MCF 10A (cell line): ENCODE measurements at regions of chr5 and their contacts with region 1.

Region 1: GRCh38 chr5:151051066-151051930 is 29.5 kb downstream of the TNIP1 start:
- DNase-seq: peak; percentile 83
- H3K4me3 Mint-ChIP-seq: no peak overlapping the region
- H3K27ac Mint-ChIP-seq: peak overlapping the region; percentile 62
- H3K4me1 Mint-ChIP-seq: no peaks in the 10 kb centered on the region
- H3K27me3 Mint-ChIP-seq: no peaks in the 10 kb centered on the region
- CTCF ChIP-seq: peak; percentile 89

Region 2: GRCh38 chr5:150801117-150801927 is 250.0 kb before region 1 on chr5:
- CTCF ChIA-PET with region 1: interaction called, 3 read pairs
- POLR2A ChIA-PET with region 1: no interaction called
- intact Hi-C with region 1: loop called (anchors 5 kb)
- DNase-seq: peak; percentile 87
- H3K4me3 Mint-ChIP-seq: peak overlapping the region; percentile 64
- H3K27ac Mint-ChIP-seq: peak overlapping the region; percentile 36
- H3K4me1 Mint-ChIP-seq: peaks cover 14% of the 10 kb centered on the region
- H3K27me3 Mint-ChIP-seq: no peaks in the 10 kb centered on the region
- CTCF ChIP-seq: peak; percentile 68

Region 3: DNA sequence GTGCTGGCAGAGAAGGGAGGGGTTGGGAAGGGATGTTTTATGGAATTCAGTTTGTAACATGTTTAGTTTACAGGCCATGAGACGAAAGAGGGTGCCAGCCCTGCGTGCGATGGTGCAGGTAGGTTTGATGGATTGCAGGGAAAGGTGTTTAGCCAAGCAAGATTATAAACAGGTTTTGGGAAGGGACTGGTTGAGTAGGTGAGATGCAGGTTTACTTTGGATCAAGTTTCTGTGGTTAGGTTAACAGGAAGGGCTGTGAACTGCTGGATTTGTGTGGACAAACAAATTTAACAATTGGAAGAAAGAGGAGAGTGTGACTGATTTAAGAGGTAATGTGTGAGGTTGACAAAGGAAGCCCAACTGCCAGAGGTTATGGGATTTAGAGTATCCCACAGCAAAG is 63.6 kb before region 1 on chr5:
- CTCF ChIA-PET with region 1: no interaction called
- POLR2A ChIA-PET with region 1: no interaction called
- intact Hi-C with region 1: no loop called
- DNase-seq: no peak
- H3K4me3 Mint-ChIP-seq: no peak overlapping the region
- H3K27ac Mint-ChIP-seq: no peak overlapping the region
- H3K4me1 Mint-ChIP-seq: no peaks in the 10 kb centered on the region
- H3K27me3 Mint-ChIP-seq: no peaks in the 10 kb centered on the region
- CTCF ChIP-seq: no peak

Region 4: GRCh38 chr5:151002250-151002649 is 49.0 kb before region 1 on chr5:
- CTCF ChIA-PET with region 1: interaction called, 160 read pairs
- POLR2A ChIA-PET with region 1: no interaction called
- intact Hi-C with region 1: loop called (anchors 1 kb)
- DNase-seq: peak; percentile 77
- H3K4me3 Mint-ChIP-seq: no peak overlapping the region
- H3K27ac Mint-ChIP-seq: no peak overlapping the region
- H3K4me1 Mint-ChIP-seq: no peaks in the 10 kb centered on the region
- H3K27me3 Mint-ChIP-seq: no peaks in the 10 kb centered on the region
- CTCF ChIP-seq: peak; percentile 79

Region 5: DNA sequence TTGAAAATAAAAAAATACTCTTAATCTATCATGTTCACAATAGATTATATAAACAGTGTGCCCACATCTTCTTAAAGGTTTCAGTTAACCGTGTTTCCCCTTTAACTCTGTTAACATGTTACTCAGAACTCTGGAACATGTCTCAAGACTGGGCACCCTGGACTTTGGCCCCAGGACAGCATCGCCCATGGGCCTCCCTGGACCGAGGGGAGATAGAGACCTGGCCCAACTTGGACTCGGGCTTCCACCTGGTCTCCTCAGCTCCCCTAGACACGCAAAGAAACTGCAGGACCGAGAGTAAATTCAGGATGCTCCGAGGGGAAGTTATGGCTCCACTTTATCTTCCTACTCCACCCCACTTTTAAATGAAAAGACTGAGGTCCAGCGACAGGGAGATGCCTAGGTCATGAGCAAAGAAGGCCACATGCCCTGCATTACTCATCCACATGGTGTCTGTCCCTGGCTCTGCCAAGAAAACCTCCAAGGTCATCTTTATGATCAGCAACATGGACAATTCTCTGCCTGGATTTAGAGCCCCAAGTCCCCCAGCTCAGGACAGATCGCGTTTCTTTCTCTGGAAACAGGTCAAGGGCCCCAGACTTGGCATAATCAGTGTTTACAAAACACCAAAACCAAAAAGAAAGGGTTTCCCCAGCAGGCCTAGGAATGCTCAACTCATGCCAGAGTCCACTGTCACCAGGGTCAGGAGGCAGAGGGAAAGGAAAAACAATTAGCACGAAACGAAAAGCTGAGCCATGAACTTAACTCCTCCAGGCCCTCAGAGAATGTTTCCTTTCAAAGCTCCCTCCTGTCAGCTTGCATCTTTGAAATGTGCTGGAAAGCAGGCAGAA is 13.5 kb before region 1 on chr5:
- CTCF ChIA-PET with region 1: interaction called, 230 read pairs
- POLR2A ChIA-PET with region 1: interaction called, 6 read pairs
- intact Hi-C with region 1: no loop called
- DNase-seq: no peak
- H3K4me3 Mint-ChIP-seq: no peak overlapping the region
- H3K27ac Mint-ChIP-seq: peak overlapping the region; percentile 75
- H3K4me1 Mint-ChIP-seq: peaks cover 7% of the 10 kb centered on the region
- H3K27me3 Mint-ChIP-seq: no peaks in the 10 kb centered on the region
- CTCF ChIP-seq: no peak

Region 6: DNA sequence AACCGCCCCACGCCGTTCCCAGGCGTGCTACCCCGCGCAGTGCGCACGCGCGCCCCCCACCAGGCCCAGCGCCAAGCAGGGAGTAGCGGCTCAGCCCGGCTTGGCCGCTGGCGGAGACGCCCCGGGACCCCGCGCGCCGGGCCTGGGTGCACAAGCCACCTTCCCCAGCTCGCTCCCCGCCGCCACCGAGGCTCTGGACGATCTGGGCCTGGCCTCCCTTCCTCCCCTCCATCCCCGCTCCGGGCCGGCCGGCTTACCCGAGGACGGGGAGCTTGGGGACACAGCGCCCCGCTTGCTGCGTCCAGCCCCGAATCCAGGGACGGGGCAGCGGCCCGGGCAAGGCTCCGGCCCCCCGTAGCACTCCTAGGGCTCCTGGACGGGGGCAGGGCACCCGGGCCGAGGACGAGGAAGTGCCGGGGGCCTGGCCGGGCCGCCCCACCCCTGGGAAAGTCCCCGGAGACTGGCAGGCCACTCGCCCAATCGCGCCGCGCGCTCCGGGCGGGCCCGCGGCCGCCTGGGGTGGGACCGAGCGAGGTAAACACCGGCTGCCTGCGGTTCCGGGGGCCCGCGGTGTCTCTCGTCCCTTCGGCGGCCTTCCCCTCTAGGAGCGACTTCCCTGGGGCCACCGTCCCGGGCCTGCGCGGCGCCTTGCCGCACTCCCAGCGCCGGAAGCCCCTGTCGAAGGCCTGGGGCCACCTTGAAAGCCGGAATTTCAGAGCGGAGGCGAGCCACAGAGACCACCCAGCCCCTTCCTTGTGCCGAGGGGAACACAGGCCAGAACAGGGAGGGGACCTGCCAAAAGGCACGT is 29.5 kb after region 1 on chr5 and contains the start of gene TNIP1:
- CTCF ChIA-PET with region 1: interaction called, 332 read pairs
- POLR2A ChIA-PET with region 1: interaction called, 21 read pairs
- intact Hi-C with region 1: loop called (anchors 2 kb)
- DNase-seq: peak; percentile 94
- H3K4me3 Mint-ChIP-seq: peak within 1 kb of the TSS; percentile 74
- H3K27ac Mint-ChIP-seq: peak within 1 kb of the TSS; percentile 59
- H3K4me1 Mint-ChIP-seq: peaks cover 78% of the 10 kb centered on the region
- H3K27me3 Mint-ChIP-seq: no peaks in the 10 kb centered on the region
- CTCF ChIP-seq: no peak
- total RNA-seq, gene TNIP1: 246 and 342 TPM in 2 replicates

Region 7: DNA sequence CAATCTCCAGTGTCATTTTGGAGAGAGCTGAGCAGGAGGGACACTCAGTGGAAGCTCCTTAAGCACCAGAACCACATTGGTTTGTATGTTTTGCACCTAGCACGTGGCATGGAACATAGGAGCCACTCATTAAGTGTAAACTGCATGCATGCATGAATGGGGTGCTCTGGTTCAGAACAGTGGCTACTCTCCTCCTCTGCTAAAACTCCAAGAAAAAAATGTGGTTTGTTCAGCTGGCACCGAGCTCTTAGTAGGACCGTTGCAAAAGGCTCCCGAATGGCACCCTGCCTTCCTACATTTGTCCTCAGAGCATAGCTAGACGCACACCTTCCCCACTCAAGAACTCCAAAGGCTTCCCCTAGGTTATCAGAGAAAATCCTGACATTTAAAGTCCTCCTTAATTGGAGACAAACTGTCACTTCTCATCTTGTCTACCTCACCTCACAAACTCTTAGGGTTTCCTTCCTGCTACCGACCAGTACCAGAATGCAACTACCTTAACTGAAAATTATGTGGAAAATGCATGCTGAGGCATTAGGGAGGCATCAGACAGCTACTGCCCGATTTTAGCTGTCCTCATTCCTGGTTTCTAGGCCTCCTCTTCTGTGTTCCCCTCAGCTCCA is 47.3 kb after region 1 on chr5:
- CTCF ChIA-PET with region 1: interaction called, 1,587 read pairs
- POLR2A ChIA-PET with region 1: interaction called, 3 read pairs
- intact Hi-C with region 1: no loop called
- DNase-seq: no peak
- H3K4me3 Mint-ChIP-seq: no peak overlapping the region
- H3K27ac Mint-ChIP-seq: no peak overlapping the region
- H3K4me1 Mint-ChIP-seq: peaks cover 23% of the 10 kb centered on the region
- H3K27me3 Mint-ChIP-seq: no peaks in the 10 kb centered on the region
- CTCF ChIP-seq: no peak

Region 8: DNA sequence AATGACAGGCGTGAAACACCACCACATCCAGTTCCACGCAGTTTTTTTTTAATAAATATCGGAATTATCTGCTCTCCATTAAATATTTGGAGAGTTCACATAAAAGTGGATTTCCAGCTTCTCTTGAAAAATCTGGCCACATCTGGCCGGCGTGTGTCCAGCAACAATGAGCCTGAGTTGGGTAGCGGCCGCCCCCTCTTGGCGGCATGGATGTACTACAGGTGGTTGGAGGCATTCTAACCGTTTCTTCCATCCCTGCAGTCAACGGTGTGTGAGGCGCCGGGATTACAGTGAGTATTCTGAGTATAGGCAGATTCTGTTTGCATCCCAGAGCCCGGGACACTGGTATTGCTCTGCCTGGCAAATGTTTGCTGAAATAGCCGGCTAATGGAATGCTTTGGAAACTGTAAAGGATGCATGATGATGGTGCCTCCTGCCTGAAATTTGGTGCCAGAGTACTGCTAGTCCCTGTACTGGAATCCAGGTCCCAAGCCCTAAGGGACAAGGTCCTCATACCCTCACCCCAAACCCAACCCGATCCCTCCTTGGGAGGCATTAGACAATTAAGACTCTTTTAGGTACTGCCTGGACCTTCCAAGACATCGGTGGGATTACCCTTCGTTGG is 188.1 kb after region 1 on chr5:
- CTCF ChIA-PET with region 1: interaction called, 37 read pairs
- POLR2A ChIA-PET with region 1: no interaction called
- intact Hi-C with region 1: loop called (anchors 1 kb)
- DNase-seq: peak; percentile 83
- H3K4me3 Mint-ChIP-seq: no peak overlapping the region
- H3K27ac Mint-ChIP-seq: peak overlapping the region; percentile 20
- H3K4me1 Mint-ChIP-seq: peaks cover 4% of the 10 kb centered on the region
- H3K27me3 Mint-ChIP-seq: no peaks in the 10 kb centered on the region
- CTCF ChIP-seq: peak; percentile 98

Region 9: DNA sequence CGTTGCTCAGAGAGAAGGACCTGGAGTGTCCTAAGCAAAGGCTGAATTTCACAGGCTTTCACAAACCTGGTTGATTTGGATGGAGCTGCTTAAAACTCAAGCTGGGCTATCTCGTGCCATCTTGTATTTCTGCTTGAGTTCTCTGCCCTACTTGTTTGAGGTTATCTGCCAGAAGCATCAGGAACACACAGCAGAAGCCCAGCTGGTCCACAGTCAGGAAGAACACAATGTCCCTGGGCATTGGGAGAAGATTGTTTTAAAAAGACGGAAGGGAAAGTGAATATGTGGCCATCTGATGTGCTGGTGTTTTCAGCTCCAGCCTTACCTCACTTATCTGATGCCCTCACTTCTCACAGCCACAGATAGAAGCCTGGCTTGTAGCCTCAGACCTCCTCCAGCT is 363.2 kb after region 1 on chr5:
- CTCF ChIA-PET with region 1: no interaction called
- POLR2A ChIA-PET with region 1: no interaction called
- intact Hi-C with region 1: no loop called
- DNase-seq: no peak
- H3K4me3 Mint-ChIP-seq: no peak overlapping the region
- H3K27ac Mint-ChIP-seq: no peak overlapping the region
- H3K4me1 Mint-ChIP-seq: no peaks in the 10 kb centered on the region
- H3K27me3 Mint-ChIP-seq: peaks cover 49% of the 10 kb centered on the region
- CTCF ChIP-seq: no peak